Astrocyte of the cerebellum (primary cell): ENCODE measurements at regions of chrX and their contacts with region 1.

Region 1: DNA sequence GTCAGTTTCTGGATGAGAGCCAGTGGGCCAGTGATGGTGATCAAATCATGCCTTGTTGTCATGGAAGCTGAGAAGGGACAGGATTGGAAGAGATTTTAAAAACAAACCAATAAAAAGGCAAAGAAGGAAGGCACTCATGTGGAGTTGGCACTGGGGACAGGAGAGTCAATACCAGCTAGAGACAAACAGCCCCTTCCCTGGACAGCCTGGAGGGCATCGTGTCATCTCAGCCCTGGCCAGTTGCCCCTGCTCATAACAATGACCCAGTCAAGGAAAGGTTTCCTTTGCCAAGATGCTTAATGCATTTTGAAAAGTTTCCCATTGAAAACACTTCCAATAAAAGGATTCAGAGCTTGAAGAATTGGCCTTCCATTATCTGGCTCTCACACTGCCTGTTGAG is 55.5 kb downstream of the SCML1 start:
- DNase-seq: no peak
- H3K4me3 ChIP-seq: no peak overlapping the region
- CTCF ChIP-seq: no peak

Region 2: DNA sequence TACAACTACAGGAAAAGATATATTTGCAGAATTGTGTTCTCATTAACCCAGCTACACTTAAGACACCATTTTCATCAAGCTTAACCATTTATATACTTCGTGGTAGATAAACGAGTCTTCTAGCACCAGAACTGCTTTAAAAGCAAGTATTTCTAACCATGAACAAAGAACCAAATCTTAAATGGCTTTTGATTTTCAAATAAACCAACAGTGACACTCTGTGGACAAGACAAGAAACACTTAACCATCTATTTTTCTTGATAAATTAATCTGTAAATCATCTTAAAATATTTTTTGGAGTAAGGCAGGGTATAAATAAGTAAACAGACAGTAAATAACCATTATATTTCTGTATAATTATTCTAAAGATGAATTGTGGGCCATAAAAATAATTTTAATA is 417.6 kb after region 1 on chrX:
- in situ Hi-C with region 1: loop called (anchors 10 kb)
- DNase-seq: peak; percentile 8
- H3K4me3 ChIP-seq: no peak overlapping the region
- CTCF ChIP-seq: no peak